ENCODE measurements at regions of chr3 and their contacts with region 1.

Region 1: GRCh38 chr3:170835336-170835735 is 34.7 kb downstream of the RPL22L1 start:
- DNase-seq: no peak

Region 2: GRCh38 chr3:170499565-170500156 is 335.7 kb before region 1 on chr3:
- in situ Hi-C with region 1: loop called (anchors 10 kb)
- DNase-seq: peak; percentile 29

Region 3: DNA sequence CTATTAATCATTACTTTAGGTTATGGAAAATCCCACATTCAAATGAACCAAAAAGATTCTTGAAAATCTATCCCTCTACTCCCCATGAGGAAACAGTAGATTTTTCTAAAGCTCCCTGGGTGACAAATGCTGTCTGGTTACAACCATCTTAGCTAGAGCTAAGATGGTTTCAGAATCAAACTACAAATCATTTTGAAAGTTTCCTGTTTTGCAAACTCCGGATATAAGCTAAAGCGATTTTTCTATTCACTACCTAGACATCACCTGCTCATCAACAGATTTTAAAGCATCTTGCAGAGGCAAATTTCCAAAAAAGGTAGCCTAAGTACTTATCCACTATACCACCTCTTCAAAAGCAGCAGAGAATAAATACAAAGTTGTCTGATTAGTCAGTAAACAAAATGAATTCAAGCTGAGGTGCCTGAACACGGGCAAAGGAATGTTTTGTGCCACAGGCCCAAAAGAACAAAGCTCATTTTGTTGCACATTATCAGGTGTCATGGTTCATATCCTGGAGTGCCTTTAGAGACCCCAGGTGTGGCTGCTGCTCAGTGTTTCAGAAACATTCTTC is 420.0 kb after region 1 on chr3:
- in situ Hi-C with region 1: no loop called
- DNase-seq: no peak

Measured in Caki2 (cell line).